AG04449 (cell line): ENCODE measurements at regions of chr10 and their contacts with region 1.

Region 1: DNA sequence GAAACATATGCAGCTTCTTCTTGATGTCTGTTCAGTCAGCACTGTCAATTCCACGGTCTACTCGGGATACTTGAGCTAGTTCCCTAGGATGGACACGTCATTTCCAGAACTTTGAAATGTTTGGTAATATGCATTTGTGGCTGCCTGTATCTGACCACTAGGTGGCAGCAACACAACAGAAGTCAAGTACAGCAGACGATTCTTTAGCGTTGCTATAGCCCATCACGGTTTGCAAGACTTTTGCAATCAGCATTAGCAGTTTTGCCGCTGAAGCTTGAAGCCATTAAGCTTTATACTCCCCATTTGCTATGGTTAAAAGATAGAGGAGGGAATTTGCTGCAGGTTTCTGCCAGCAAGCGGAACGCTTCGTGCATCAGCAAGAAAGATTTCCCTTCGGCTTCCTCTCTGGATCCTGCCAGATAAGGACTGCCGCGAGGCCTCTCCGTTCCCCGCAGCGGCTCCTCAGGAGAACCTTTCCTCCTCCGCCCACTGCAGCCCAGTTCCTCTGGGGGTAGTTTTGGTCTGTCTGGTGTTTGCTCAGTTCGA is 63.5 kb downstream of the ABCC2 start:
- DNase-seq: peak; percentile 83
- H3K4me3 ChIP-seq: no peak overlapping the region
- CTCF ChIP-seq: peak; percentile 73

Region 2: DNA sequence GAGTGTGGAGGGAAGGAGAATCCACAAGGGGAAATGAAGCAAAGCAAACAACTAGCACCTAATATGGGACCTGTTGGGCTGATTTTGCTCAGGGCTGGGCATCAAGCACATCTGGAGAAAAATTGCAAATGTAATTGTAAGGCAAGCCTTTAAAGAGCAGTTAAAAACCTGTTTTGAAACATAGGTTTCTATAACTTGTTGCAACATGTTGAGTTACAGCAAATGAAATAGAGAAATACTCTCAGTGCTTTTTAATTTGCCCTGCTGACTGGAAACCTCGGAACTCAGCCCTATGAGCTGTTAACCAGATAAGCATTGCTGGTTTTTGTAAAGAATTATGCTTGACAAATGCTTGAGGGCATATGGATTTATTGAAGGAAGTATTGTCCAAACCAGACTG is 189.3 kb before region 1 on chr10:
- CTCF ChIA-PET with region 1: no interaction called
- POLR2A ChIA-PET with region 1: no interaction called
- DNase-seq: no peak
- H3K4me3 ChIP-seq: no peak overlapping the region
- CTCF ChIP-seq: no peak

Region 3: GRCh38 chr10:99827936-99828335 is 18.0 kb before region 1 on chr10:
- CTCF ChIA-PET with region 1: interaction called, 54 read pairs
- POLR2A ChIA-PET with region 1: no interaction called
- DNase-seq: no peak
- H3K4me3 ChIP-seq: no peak overlapping the region
- CTCF ChIP-seq: no peak

Region 4: GRCh38 chr10:99895867-99896266 is 50.0 kb after region 1 on chr10:
- CTCF ChIA-PET with region 1: interaction called, 12 read pairs
- POLR2A ChIA-PET with region 1: no interaction called
- DNase-seq: no peak
- H3K4me3 ChIP-seq: no peak overlapping the region
- CTCF ChIP-seq: no peak

Region 5: GRCh38 chr10:99976886-99977665 is 131.2 kb after region 1 on chr10:
- CTCF ChIA-PET with region 1: interaction called, 18 read pairs
- POLR2A ChIA-PET with region 1: no interaction called
- DNase-seq: peak; percentile 92
- H3K4me3 ChIP-seq: peak overlapping the region; percentile 25
- CTCF ChIP-seq: no peak

Region 6: DNA sequence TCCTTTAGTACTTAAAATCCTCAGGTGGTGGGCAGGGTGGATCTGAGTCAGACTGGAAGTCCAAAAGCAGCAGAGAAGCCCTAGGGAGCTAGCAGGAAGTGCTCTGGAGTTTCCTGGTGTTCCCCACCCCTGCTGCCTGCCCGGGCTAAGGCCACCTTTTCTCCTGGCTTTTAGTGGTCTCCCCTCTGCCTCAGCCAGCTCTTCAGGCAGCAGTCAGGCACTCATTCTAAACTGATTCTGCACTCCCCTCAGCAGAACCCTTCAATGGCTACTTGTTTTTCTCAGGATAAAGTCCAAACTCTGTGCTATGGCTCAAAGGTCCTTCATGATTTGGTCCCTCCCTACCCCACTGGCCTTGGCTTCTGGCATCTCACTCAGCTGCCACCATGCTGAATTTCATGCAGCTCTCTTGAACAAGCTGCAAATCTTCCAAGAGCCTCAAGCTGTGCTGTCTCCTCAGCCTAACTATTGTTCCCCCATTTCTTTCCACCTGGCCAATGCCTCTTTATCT is 192.7 kb after region 1 on chr10:
- CTCF ChIA-PET with region 1: interaction called, 470 read pairs
- POLR2A ChIA-PET with region 1: no interaction called
- DNase-seq: no peak
- H3K4me3 ChIP-seq: no peak overlapping the region
- CTCF ChIP-seq: no peak

Region 7: DNA sequence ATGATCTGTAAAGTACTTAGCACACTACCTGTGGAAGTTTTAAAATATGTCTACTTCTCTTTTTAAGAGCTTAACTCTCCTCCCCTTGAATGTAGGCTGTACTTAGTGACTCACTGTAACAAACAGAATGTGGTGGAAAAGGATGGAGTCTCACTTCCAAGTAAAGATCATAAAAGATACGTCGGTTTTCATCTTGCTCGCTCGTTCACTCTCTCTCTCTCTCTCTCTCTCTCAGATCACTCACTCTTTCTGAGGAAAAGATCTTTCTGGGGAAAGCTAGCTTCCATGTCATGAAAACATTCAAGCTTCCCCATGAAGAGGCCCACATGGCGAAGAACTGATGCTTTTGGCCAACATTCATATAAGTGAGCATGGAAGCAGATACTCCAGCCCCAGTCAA is 378.0 kb after region 1 on chr10:
- CTCF ChIA-PET with region 1: interaction called, 13 read pairs
- POLR2A ChIA-PET with region 1: no interaction called
- DNase-seq: no peak
- H3K4me3 ChIP-seq: no peak overlapping the region
- CTCF ChIP-seq: no peak

Region 8: GRCh38 chr10:100433253-100434240 is 587.6 kb after region 1 on chr10:
- CTCF ChIA-PET with region 1: interaction called, 12 read pairs
- POLR2A ChIA-PET with region 1: no interaction called
- DNase-seq: peak; percentile 55
- H3K4me3 ChIP-seq: no peak overlapping the region
- CTCF ChIP-seq: peak; percentile 89